Activated naive CD4-positive, alpha-beta T cell treated with anti-CD3 and anti-CD28 coated beads for 36 hours (primary cell): ENCODE measurements at regions of chr11 and their contacts with region 1.

Region 1: GRCh38 chr11:13462901-13463778 is at the start of gene BTBD10:
- DNase-seq: peak; percentile 94
- H3K4me3 Mint-ChIP-seq: peak within 1 kb of the TSS; percentile 99
- H3K27ac Mint-ChIP-seq: peak within 1 kb of the TSS; percentile 96
- H3K4me1 Mint-ChIP-seq: peaks cover 33% of the 10 kb centered on the region
- H3K27me3 Mint-ChIP-seq: no peaks in the 10 kb centered on the region
- total RNA-seq, gene BTBD10: 20.9 to 21.0 TPM

Region 2: DNA sequence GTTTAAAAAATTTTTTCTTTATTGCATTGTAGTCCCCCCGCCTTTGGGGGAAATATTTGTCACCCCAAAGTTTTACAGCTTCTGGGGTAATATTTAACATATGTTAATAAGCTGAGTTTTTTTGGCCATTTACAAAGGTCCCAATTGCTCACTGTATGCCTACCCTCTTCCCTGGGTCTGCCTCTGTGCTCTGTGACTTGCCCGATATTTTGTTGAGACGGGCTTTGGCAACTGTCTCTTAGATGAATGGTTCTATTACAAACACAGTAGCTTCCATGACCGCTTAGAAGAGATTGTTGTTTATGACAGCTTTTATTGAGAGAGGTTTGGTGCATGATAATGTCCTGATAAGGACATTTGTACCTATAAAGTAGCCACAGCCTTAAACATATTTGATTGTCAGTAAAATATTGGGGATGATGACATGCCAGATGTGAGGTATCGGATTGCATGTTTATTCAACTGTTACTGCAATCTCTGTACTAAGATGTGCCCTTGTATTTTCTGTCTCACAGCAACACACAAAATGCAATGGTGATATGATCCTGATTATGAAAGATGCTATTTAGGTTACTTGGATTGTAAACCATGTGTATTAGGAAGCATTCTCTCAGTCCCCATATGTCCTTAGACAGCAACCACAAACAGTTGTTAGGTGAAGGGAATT is 685.8 kb before region 1 on chr11:
- CTCF ChIA-PET with region 1: no interaction called
- intact Hi-C with region 1: no loop called
- DNase-seq: no peak
- H3K4me3 Mint-ChIP-seq: no peak overlapping the region
- H3K27ac Mint-ChIP-seq: no peak overlapping the region
- H3K4me1 Mint-ChIP-seq: no peaks in the 10 kb centered on the region
- H3K27me3 Mint-ChIP-seq: peaks cover 7% of the 10 kb centered on the region

Region 3: DNA sequence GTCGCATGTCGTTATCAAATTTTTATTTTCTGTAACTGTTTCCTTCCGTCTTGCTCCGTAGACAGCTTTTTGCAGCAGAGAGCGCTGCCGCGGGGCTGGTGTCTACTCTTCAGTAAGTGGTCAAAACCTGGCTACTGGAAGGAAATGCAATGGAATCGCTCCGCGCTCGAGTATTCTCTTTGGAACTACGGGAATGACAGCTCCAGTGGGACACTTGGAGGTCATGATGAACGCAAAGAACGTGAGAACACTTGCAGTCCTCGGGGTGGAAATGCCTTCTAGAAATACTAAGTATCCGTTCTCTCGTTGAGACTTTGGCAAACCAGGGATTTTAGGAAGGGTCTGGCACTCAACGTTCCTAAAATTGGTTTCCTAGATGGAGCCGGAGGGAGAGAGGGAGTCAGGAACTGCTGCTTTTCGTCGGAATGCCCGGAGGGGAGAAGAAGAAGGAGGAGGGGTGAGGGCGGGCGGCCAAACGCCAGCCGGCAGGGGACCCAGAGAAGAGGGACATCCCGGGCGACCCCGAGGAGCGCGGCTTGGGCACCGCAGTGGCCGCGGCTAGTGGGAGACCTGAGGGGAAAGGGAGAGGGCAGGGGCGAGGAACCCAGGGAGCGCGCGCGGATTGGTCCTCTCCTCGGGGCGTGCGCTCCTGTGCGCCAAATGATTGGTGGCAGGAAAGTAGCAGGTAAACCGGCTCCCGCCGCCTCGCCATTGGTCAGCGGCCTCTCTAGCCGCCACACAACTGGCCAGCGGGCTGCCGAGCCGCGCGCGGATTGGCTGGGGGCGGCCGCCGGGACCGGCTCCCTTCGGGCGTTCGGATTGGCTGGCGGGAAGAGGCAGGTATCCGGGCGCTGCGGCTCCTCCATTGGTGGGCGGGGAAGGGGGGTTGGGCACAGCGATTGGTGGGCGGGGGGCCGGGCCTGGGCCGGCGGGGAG is 186.0 kb before region 1 on chr11:
- CTCF ChIA-PET with region 1: no interaction called
- intact Hi-C with region 1: loop called (anchors 1 kb)
- DNase-seq: peak; percentile 98
- H3K4me3 Mint-ChIP-seq: peak overlapping the region; percentile 94
- H3K27ac Mint-ChIP-seq: peak overlapping the region; percentile 74
- H3K4me1 Mint-ChIP-seq: peaks cover 42% of the 10 kb centered on the region
- H3K27me3 Mint-ChIP-seq: no peaks in the 10 kb centered on the region

Region 4: DNA sequence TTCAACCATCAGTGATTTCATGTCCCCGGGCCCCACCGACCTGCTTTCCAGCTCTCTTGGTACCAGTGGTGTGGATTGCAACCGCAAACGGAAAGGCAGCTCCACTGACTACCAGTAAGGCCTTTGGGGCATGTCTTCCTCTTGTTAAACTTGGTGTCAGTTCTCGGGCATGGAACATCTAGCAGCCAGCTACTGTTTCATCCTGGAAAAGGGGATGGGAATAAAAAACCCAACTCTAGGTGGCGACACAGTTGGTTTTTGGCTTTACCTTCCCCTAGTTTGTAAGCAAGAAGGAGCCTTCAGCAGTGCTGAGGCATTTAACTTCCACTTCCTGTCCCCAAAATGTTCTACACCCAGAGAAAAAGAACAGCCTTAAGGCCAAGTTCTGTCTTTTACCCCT is 108.8 kb before region 1 on chr11:
- CTCF ChIA-PET with region 1: interaction called, 4 read pairs
- intact Hi-C with region 1: loop called (anchors 5 kb)
- DNase-seq: no peak
- H3K4me3 Mint-ChIP-seq: no peak overlapping the region
- H3K27ac Mint-ChIP-seq: no peak overlapping the region
- H3K4me1 Mint-ChIP-seq: no peaks in the 10 kb centered on the region
- H3K27me3 Mint-ChIP-seq: no peaks in the 10 kb centered on the region

Region 5: DNA sequence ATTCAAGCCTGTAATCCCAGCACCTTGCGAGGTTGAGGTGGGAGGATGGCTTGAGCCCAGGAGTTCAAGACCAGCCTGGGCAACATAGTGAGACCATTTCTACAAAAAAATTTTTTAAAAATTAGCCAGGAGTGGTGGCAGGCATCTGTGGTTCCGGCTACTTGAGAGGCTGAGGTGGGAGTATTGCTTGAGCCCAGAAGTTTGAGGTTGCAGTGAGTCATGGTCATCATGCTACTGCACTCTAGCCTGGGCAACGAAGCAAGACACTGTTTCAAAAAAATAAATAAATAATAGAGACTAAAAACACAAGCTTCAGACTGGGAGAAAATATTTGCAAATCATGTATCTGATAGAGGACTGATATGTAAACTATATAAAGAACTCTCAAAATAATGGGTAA is 33.3 kb before region 1 on chr11:
- CTCF ChIA-PET with region 1: no interaction called
- intact Hi-C with region 1: loop called (anchors 2 kb)
- DNase-seq: no peak
- H3K4me3 Mint-ChIP-seq: no peak overlapping the region
- H3K27ac Mint-ChIP-seq: no peak overlapping the region
- H3K4me1 Mint-ChIP-seq: peaks cover 28% of the 10 kb centered on the region
- H3K27me3 Mint-ChIP-seq: no peaks in the 10 kb centered on the region

Region 6: DNA sequence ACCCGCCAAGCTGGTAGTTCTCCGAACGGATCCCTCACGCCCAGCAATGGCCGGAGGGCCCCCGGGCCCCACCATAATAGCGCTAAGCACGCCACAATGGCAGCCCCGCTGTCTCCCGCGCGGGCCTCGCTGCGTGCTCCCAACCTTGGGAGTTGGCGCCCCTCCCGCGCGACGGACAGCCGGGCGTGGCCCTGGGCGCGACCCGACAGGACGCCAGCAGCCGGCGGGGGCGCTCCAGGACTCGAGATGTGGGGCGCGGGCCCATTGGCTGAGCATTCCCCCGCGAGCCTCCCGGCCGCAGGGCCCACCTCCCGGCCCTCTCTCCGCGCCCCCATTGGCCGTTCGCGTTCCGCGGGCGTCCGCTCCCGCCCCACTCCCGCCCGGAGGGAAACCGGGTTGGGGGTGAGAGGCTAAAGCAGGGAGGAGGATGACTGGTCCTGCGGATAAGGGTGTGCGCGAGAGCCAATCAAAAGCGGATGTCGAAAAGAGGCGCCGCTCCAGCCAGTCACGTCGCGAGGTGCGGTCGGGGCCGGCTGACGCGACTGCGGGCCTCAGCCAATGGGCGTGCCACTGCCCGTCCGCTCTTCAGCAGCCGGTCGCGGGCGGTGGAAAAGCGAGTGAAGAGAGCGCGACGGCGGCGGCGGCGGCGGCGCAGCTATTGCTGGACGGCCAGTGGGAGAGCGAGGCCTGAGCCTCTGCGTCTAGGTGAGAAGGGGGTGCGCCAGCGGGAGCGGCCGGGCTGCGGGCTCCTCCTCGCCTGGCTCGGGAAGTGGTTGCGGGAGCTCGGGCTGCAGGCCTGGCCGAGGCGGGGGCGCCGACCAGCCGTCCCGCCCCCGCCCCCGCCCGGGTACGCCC is 205.2 kb after region 1 on chr11 and contains the start of gene FAR1:
- CTCF ChIA-PET with region 1: interaction called, 3 read pairs
- intact Hi-C with region 1: loop called (anchors 1 kb)
- DNase-seq: peak; percentile 98
- H3K4me3 Mint-ChIP-seq: peak within 1 kb of the TSS; percentile 95
- H3K27ac Mint-ChIP-seq: peak within 1 kb of the TSS; percentile 92
- H3K4me1 Mint-ChIP-seq: peaks cover 40% of the 10 kb centered on the region
- H3K27me3 Mint-ChIP-seq: peaks cover 7% of the 10 kb centered on the region
- total RNA-seq, gene FAR1: 37.2 to 42.3 TPM